Aorta (tissue), 5 donors: ENCODE measurements at regions of chr1 and their contacts with region 1.

Region 1: GRCh38 chr1:234610348-234611152 is 572 bp upstream of the IRF2BP2 start:
- DNase-seq: peak; percentile 98
- ATAC-seq: peak; percentile 87
- H3K4me3 ChIP-seq: peak overlapping the region; percentile 89 to 92
- H3K27ac ChIP-seq: peak overlapping the region; percentile 96 to 97
- H3K4me1 ChIP-seq: peaks cover 5% of the 10 kb centered on the region in 2 donors
- H3K27me3 ChIP-seq: no peaks in the 10 kb centered on the region

Region 2: DNA sequence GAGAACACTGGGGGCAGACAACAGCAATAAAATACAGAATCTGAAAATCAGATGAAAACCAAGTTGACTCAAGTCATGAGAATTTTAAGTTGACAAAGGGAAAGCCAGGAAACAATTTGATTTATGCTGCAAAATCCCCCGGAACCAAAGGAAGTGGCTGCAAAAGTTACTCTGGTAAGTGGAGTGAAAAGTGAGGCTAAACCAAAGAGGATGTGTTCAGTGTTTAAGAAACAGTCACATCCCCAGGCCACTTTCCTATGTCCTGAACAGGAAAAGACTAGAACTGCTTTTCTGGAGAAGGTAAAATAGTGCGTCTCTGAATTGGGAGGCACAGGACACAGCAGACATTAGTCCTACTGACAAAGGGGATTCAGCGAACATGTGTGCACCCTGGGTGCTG is 137.4 kb before region 1 on chr1:
- intact Hi-C with region 1: no loop called
- DNase-seq: no peak
- ATAC-seq: no peak
- H3K4me3 ChIP-seq: no peak overlapping the region
- H3K27ac ChIP-seq: no peak overlapping the region
- H3K4me1 ChIP-seq: no peaks in the 10 kb centered on the region
- H3K27me3 ChIP-seq: no peaks in the 10 kb centered on the region

Region 3: GRCh38 chr1:234665975-234666605 is 55.5 kb after region 1 on chr1:
- intact Hi-C with region 1: no loop called
- DNase-seq: no peak
- ATAC-seq: no peak
- H3K4me3 ChIP-seq: no peak overlapping the region
- H3K27ac ChIP-seq: no peak overlapping the region
- H3K4me1 ChIP-seq: no peaks in the 10 kb centered on the region
- H3K27me3 ChIP-seq: no peaks in the 10 kb centered on the region

Region 4: DNA sequence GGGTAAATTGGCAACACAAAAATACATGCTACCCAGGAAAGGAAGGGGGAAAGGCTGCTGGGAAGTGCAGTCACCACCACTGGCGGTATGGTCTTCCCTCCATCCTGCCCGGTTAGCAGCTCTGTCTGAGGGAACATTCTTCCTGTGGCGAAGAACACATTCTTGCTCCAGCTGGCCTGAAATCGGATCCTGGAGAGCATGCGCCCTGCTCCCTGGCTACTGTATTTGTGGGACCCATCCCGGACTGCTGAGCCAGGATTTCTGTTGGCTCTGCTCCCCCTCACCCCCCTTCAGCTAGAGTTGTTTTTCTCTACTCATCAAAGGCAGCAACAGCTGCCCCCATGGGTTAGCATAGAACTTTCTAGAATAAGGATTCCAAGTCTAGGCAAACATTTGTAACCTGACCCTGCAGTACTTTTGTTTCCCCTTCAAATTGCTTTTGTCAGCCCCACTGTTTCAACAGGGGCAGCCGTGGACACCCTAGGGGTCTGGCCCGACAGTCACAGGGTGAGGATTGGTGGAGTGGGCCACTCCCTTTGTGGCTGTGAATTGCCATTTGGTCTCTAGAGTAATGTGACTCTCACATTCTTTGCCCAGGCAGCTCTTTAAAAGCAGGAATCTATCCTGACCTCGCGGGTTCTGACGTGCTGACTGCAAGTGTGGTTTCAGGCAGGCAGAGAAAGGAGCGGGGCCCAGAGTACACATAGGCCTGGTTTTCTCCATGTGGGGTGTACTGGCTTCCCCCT is 360.4 kb after region 1 on chr1:
- intact Hi-C with region 1: loop called in 1 of 2 experiments (anchors 5 kb)
- DNase-seq: peak; percentile 86 to 91
- ATAC-seq: peak; percentile 87
- H3K4me3 ChIP-seq: no peak overlapping the region
- H3K27ac ChIP-seq: peak overlapping the region; percentile 90 to 98
- H3K4me1 ChIP-seq: peaks cover 0 to 7% of the 10 kb centered on the region in 2 donors
- H3K27me3 ChIP-seq: no peaks in the 10 kb centered on the region

Region 5: GRCh38 chr1:234980645-234981396 is 370.3 kb after region 1 on chr1:
- intact Hi-C with region 1: loop called in 1 of 2 experiments (anchors 5 kb)
- DNase-seq: peak; percentile 95
- ATAC-seq: peak; percentile 90
- H3K4me3 ChIP-seq: no peak overlapping the region
- H3K27ac ChIP-seq: peak overlapping the region; percentile 97 to 98
- H3K4me1 ChIP-seq: peaks cover 7 to 10% of the 10 kb centered on the region in 2 donors
- H3K27me3 ChIP-seq: no peaks in the 10 kb centered on the region